Activated T-helper 1 cell treated with anti-CD3 and anti-CD28 coated beads, Interleukin-12 subunit alpha, Interleukin-12 subunit beta, Interleukin-2, Interleukin-4 antibody, amounts not matched to agents 30 ng/mL and 10 ng/mL and 1 ng/mL, durations not matched to agents 14 hours and 24 hours and 36 hours (primary cell): ENCODE measurements at regions of chr2 and their contacts with region 1.

Region 1: GRCh38 chr2:11129598-11130449 is 25.4 kb upstream of the SLC66A3 start:
- DNase-seq: peak; percentile 79
- H3K4me3 Mint-ChIP-seq: peak overlapping the region; percentile 57
- H3K27ac Mint-ChIP-seq: no peak overlapping the region
- H3K4me1 Mint-ChIP-seq: peaks cover 13% of the 10 kb centered on the region
- H3K27me3 Mint-ChIP-seq: peaks cover 10% of the 10 kb centered on the region

Region 2: GRCh38 chr2:11154923-11155380 is 25.1 kb after region 1 on chr2:
- intact Hi-C with region 1: loop called (anchors 1 kb)
- DNase-seq: peak; percentile 94
- H3K4me3 Mint-ChIP-seq: peak overlapping the region; percentile 85
- H3K27ac Mint-ChIP-seq: peak overlapping the region; percentile 83
- H3K4me1 Mint-ChIP-seq: peaks cover 12% of the 10 kb centered on the region
- H3K27me3 Mint-ChIP-seq: peaks cover 7% of the 10 kb centered on the region

Region 3: DNA sequence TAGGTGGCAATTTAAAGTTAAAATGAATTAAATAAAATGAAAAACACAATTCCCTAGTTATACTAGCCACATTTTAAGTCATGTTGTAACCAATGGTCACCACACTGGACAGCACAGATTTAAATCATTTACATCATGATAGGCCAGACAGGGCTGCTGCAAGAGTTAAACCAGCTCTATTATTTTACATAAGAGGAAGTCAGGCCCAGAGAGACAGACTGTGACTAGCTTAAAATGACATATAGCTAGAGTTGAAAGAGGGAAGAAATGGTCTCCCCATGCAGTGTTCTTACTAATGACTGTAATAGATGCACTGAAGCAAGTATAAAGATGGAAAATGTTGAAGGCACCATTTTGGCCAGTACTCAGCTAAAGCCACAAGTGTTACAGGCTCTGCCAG is 95.1 kb after region 1 on chr2:
- intact Hi-C with region 1: no loop called
- DNase-seq: no peak
- H3K4me3 Mint-ChIP-seq: no peak overlapping the region
- H3K27ac Mint-ChIP-seq: no peak overlapping the region
- H3K4me1 Mint-ChIP-seq: no peaks in the 10 kb centered on the region
- H3K27me3 Mint-ChIP-seq: no peaks in the 10 kb centered on the region

Region 4: GRCh38 chr2:11344342-11344955 is 214.6 kb after region 1 on chr2 and contains the start of gene ROCK2:
- intact Hi-C with region 1: loop called (anchors 1 kb)
- DNase-seq: peak; percentile 62
- H3K4me3 Mint-ChIP-seq: peak within 1 kb of the TSS; percentile 99
- H3K27ac Mint-ChIP-seq: peak within 1 kb of the TSS; percentile 95
- H3K4me1 Mint-ChIP-seq: peaks cover 35% of the 10 kb centered on the region
- H3K27me3 Mint-ChIP-seq: peaks cover 14% of the 10 kb centered on the region
- total RNA-seq, gene ROCK2: 20.5 and 21.7 TPM in 2 replicates

Region 5: DNA sequence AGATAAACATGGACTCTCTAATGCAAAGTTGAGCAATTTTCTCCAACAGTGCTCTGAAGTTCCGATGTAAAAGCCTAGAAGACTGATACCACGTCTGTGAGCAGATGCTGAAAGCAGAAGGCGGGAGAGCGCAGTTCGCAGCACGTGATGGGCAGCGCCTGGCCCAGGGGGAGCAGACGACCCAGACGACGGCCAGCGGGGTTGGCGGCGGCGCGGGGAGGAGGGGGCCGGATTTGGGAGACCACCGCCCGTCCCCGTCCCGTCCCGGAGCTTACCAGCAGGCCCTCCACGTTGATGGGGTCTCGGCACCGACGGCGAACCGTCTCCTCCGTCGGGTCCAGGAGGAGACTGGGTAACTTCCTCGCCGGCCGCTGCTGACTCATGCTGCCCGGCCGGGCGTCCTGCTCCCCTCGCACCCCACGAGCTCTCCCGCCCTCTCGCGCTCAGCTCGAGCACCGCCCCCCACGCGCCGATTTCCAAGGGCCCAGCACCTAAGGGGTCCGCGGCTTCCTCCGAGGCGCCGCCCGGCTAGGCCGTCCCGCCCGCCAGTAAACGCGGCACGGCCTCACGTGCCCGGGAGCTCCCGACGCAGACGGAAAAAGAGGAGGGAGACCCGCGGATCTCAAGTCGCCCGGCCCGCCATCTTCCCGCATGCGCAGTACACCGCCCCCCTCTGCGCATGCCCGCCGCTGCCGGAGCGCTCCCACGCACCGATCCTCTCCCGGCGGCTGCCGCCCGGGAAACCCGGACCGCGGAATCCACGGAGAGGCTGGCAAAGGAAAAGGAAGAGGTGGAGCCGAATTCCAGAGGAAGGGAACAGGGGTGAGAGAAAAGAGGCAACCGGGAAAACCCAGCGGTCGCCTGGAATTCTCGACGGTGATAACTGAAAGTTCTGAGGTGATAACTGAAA is 335.9 kb after region 1 on chr2 and contains the start of gene E2F6:
- intact Hi-C with region 1: loop called (anchors 1 kb)
- DNase-seq: peak; percentile 82
- H3K4me3 Mint-ChIP-seq: peak within 1 kb of the TSS; percentile 86
- H3K27ac Mint-ChIP-seq: peak within 1 kb of the TSS; percentile 92
- H3K4me1 Mint-ChIP-seq: peaks cover 34% of the 10 kb centered on the region
- H3K27me3 Mint-ChIP-seq: no peaks in the 10 kb centered on the region
- total RNA-seq, gene E2F6: 22.1 and 23.7 TPM in 2 replicates

Region 6: GRCh38 chr2:11681722-11682589 is 552.1 kb after region 1 on chr2:
- intact Hi-C with region 1: loop called (anchors 5 kb)
- DNase-seq: peak; percentile 42
- H3K4me3 Mint-ChIP-seq: no peak overlapping the region
- H3K27ac Mint-ChIP-seq: no peak overlapping the region
- H3K4me1 Mint-ChIP-seq: no peaks in the 10 kb centered on the region
- H3K27me3 Mint-ChIP-seq: peaks cover 53% of the 10 kb centered on the region